ENCODE measurements at regions of chr7 and their contacts with region 1.

Region 1: GRCh38 chr7:16967300-16967811 is 85.6 kb upstream of the AGR3 start:
- DNase-seq: no peak
- H3K4me3 ChIP-seq: no peak overlapping the region
- H3K27ac ChIP-seq: peak overlapping the region; percentile 53 to 56
- H3K4me1 ChIP-seq: peaks cover 0 to 7% of the 10 kb centered on the region in 2 donors
- H3K27me3 ChIP-seq: no peaks in the 10 kb centered on the region
- CTCF ChIP-seq: no peak

Region 2: GRCh38 chr7:16982640-16983350 is 15.4 kb after region 1 on chr7:
- intact Hi-C with region 1: loop called (anchors 2 kb)
- DNase-seq: no peak
- H3K4me3 ChIP-seq: no peak overlapping the region
- H3K27ac ChIP-seq: no peak overlapping the region
- H3K4me1 ChIP-seq: peaks cover 0 to 7% of the 10 kb centered on the region in 2 donors
- H3K27me3 ChIP-seq: no peaks in the 10 kb centered on the region
- CTCF ChIP-seq: peak; percentile 52 to 86 (median 73)

Region 3: GRCh38 chr7:17275749-17276671 is 308.7 kb after region 1 on chr7:
- intact Hi-C with region 1: loop called (anchors 5 kb)
- DNase-seq: peak in 1 of 2 donors; percentile 70
- H3K4me3 ChIP-seq: peak overlapping the region in 1 of 2 donors; percentile 13
- H3K27ac ChIP-seq: peak overlapping the region; percentile 63 to 70
- H3K4me1 ChIP-seq: peaks cover 0 to 17% of the 10 kb centered on the region in 2 donors
- H3K27me3 ChIP-seq: no peaks in the 10 kb centered on the region
- CTCF ChIP-seq: no peak

Region 4: DNA sequence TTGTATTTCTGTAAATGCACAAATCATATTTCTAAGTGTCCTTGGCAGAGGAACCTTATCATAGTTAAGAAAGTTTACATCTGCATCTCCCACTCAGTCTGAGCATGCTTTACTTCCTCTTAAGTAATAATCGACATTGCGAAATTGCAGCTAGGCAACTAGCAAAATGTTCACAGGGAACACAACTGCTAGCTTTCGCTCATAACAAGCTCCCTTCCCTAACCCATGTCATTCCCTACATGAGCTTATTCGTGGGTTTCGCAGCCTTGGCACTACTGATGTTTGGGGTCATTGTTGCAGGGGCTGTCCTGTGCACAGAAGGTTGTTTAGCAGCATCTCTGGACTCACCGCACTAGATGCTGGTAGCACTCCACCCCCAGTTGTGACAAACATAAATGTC is 402.7 kb after region 1 on chr7:
- intact Hi-C with region 1: loop called (anchors 5 kb)
- DNase-seq: no peak
- H3K4me3 ChIP-seq: no peak overlapping the region
- H3K27ac ChIP-seq: peak overlapping the region; percentile 60 to 71
- H3K4me1 ChIP-seq: peaks cover 0 to 44% of the 10 kb centered on the region in 2 donors
- H3K27me3 ChIP-seq: no peaks in the 10 kb centered on the region
- CTCF ChIP-seq: no peak

Region 5: DNA sequence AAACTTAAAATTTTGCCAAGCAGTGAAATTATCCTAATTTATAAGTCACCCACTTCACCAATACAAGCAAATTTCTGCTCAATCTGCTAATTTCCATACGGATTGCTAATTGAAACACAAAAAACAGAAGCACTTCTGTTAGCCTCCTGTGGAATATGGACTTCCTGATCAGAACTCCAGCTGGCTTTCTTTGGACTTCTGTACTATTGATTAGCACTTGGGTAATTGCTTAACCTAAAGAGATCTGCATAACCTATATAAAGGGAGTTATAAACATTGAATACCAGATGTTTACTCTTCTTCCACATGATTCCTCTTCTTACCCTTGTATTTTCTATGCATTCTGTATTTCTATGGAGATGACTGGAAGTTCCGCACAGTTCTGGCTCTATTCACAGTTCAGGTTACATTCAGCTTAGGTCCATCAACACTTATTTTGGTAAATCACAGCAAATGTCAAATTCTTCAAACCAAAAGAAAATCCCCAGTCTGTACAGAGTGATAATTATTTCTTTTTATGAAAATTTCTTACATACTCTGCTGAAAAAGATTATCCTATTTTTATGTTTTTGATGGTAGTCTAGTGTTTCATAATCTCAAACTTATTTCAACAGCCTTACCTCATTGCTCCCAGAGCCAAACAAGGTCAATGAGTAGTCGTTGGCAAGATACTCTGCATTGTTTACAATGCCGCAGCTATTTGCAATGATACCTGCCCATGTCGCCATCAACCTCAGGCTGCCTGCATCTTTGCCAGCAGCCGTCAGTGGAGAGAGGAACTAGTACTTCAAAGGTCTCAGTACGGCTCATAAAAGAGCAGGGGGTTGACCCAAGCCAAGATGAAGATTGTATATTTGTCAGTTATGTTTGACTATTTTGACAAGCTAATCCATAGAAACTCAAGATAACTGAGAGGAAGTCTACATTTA is 556.7 kb after region 1 on chr7:
- intact Hi-C with region 1: loop called (anchors 10 kb)
- DNase-seq: peak in 1 of 2 donors; percentile 65
- H3K4me3 ChIP-seq: peak overlapping the region in 1 of 2 donors; percentile 5
- H3K27ac ChIP-seq: peak overlapping the region; percentile 2 to 12
- H3K4me1 ChIP-seq: peaks cover 0 to 26% of the 10 kb centered on the region in 2 donors
- H3K27me3 ChIP-seq: no peaks in the 10 kb centered on the region
- CTCF ChIP-seq: no peak

Region 6: DNA sequence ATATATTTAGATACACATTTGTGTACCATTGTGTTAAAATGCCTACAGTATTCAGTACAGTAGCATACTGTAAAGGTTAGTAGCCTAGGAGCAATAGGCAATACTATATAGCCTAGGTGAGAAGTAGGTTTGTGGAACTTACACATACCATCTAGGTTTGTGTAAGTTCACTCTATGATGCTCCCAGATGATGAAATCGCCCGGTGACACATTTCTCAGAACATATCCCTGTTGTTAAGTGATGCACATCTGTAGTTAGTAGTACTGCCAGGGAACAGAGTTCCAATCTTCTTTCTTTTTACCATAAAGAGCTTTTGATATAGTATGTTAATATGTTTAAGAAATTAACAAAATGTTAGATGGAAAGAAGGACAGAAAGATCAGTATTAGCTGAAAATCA is 834.7 kb after region 1 on chr7:
- intact Hi-C with region 1: no loop called
- DNase-seq: no peak
- H3K4me3 ChIP-seq: no peak overlapping the region
- H3K27ac ChIP-seq: no peak overlapping the region
- H3K4me1 ChIP-seq: no peaks in the 10 kb centered on the region
- H3K27me3 ChIP-seq: no peaks in the 10 kb centered on the region
- CTCF ChIP-seq: no peak

Measured in ascending aorta (tissue), 2 donors.